Right cardiac atrium (tissue), 5 donors: ENCODE measurements at regions of chr10 and their contacts with region 1.

Region 1: GRCh38 chr10:69914398-69915214 is 112.9 kb downstream of the COL13A1 start:
- DNase-seq: peak; percentile 77 to 91 (median 86)
- ATAC-seq: peak; percentile 71 to 78
- H3K4me3 ChIP-seq: no peak overlapping the region
- H3K27ac ChIP-seq: no peak overlapping the region
- H3K4me1 ChIP-seq: peaks cover 19% of the 10 kb centered on the region
- H3K27me3 ChIP-seq: no peaks in the 10 kb centered on the region

Region 2: GRCh38 chr10:69375307-69376151 is 539.1 kb before region 1 on chr10:
- intact Hi-C with region 1: no loop called
- DNase-seq: peak; percentile 48 to 81 (median 79)
- ATAC-seq: peak; percentile 67 to 85
- H3K4me3 ChIP-seq: no peak overlapping the region
- H3K27ac ChIP-seq: peak overlapping the region; percentile 37
- H3K4me1 ChIP-seq: peaks cover 18% of the 10 kb centered on the region
- H3K27me3 ChIP-seq: no peaks in the 10 kb centered on the region

Region 3: GRCh38 chr10:69644658-69645295 is 269.8 kb before region 1 on chr10:
- intact Hi-C with region 1: loop called in 3 of 4 experiments (anchors 2 to 10 kb)
- DNase-seq: peak; percentile 61 to 86 (median 78)
- ATAC-seq: peak; percentile 39 to 65
- H3K4me3 ChIP-seq: no peak overlapping the region
- H3K27ac ChIP-seq: no peak overlapping the region
- H3K4me1 ChIP-seq: no peaks in the 10 kb centered on the region
- H3K27me3 ChIP-seq: no peaks in the 10 kb centered on the region

Region 4: DNA sequence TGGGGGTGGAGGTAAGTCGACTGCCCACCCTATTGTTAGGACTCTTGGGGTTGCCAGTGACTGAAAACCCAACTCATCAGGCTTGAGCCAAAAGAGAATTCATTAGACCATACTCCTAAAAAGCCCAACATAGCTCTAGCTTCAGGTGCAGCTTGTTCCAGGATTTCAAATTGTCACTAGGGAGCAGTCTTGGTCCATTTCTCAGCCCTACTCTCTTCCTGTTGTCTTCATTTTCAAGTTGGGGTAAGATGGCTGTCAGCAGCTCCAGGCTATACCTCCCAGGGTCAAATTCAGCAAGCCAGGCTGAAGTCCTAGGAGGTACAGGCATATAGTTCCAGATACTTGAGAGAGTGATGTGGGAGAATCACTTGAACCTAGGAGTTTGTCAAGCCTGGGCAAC is 127.8 kb before region 1 on chr10:
- intact Hi-C with region 1: loop called in 3 of 4 experiments (anchors 5 kb)
- DNase-seq: no peak
- ATAC-seq: peak; percentile 33 to 51
- H3K4me3 ChIP-seq: no peak overlapping the region
- H3K27ac ChIP-seq: no peak overlapping the region
- H3K4me1 ChIP-seq: no peaks in the 10 kb centered on the region
- H3K27me3 ChIP-seq: no peaks in the 10 kb centered on the region